ENCODE measurements at regions of chr7 and their contacts with region 1.

Region 1: DNA sequence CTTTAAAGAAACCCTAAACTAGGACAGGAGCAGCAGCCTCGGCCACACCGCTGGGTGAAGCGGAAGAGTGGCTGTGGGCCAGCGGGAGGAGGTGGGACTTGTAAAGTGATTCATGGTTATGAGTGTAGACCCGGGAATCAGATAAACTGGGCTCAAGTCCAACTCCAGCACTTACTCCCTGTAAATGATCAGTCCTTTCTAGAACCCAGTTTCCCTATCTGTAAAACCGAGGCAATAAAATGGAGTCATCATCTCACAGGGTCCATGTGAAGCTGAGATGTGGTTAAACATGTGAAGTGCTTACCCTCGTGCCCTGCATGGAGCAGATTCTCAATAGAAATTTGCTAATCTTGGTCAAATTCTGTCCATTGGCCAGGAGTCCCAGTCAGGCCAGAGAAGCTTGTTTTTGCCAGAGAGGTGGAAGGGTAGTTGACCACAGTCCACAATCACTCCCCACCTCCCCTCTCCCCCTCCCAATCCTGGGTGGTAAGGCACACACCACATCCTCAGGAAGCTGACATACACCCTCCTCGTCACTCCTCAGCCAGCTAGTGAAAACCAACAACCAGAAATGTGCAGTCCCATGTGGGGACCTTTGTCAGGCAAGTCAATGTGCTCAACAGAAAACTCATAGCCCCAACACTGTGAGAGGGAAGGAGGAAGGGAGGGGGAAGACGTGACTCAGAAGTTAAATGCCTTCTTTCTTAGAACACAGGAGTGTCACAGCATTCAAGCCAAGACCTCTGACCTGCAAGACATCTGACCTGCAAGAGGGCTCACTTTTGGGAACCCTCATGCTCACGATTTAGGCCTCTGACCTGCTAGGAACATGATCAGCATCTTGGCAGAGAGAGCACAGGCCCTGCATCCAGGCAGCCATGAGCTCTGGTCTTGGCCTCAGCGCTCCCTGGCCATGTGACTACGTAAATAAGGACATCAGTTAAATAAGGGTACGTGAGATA is 145.1 kb downstream of the PLXNA4 start:
- DNase-seq: peak; percentile 24 to 89
- H3K4me3 ChIP-seq: no peak overlapping the region
- H3K27ac ChIP-seq: peak overlapping the region; percentile 51 to 69
- H3K4me1 ChIP-seq: peaks cover 0 to 45% of the 10 kb centered on the region in 2 donors
- H3K27me3 ChIP-seq: no peaks in the 10 kb centered on the region
- CTCF ChIP-seq: no peak

Region 2: DNA sequence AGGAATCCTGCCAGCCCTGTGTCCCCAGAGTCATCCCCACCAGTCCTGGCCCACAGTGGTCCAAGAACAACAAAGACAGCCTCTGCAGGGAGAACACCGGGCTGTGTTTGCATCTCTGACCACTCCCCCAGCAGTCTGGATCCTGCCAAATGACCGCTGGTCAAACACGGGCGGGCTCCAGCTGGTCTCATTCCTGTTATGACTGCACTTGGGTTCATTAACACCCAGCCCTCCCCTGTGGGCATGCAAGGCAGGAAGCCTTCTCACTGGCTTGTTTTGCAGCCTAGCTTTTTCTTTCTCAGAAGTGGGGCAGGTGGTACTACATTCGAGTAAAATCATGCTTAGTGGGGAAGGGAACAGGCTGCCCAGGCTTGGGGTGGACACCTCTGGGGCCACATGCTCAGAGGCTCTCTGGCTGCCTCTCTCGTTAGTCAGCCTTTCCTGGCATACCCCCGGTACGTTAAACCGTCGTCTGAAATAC is 44.9 kb before region 1 on chr7:
- intact Hi-C with region 1: loop called (anchors 5 kb)
- DNase-seq: peak; percentile 51 to 89
- H3K4me3 ChIP-seq: peak overlapping the region in 1 of 2 donors; percentile 9
- H3K27ac ChIP-seq: peak overlapping the region; percentile 63 to 69
- H3K4me1 ChIP-seq: peaks cover 0 to 17% of the 10 kb centered on the region in 2 donors
- H3K27me3 ChIP-seq: no peaks in the 10 kb centered on the region
- CTCF ChIP-seq: no peak

Region 3: DNA sequence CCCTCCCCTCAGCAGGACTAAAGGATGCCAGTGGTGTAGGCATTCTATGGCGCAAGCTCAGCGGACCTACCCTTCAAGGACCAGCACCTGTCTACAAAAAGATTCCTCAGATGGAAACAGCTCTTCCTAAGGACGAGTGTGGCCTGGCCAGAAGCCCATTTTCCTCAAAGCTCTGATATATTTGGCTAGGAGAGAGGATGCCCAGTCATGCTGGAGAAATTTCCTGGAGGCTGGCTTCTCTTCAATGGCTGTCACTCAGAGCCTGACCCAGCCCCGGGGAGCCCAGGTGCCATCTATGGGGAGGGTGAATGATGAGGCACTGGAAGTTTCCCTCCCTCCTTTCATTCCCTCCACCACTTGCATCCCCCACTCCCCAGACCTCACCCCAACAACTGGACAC is 33.6 kb after region 1 on chr7:
- intact Hi-C with region 1: loop called (anchors 5 kb)
- DNase-seq: peak in 1 of 2 donors; percentile 79
- H3K4me3 ChIP-seq: no peak overlapping the region
- H3K27ac ChIP-seq: peak overlapping the region in 1 of 2 donors; percentile 9
- H3K4me1 ChIP-seq: peaks cover 2 to 11% of the 10 kb centered on the region in 2 donors
- H3K27me3 ChIP-seq: no peaks in the 10 kb centered on the region
- CTCF ChIP-seq: no peak

Region 4: GRCh38 chr7:132789281-132789680 is 358.1 kb after region 1 on chr7:
- intact Hi-C with region 1: no loop called
- DNase-seq: no peak
- H3K4me3 ChIP-seq: no peak overlapping the region
- H3K27ac ChIP-seq: no peak overlapping the region
- H3K4me1 ChIP-seq: no peaks in the 10 kb centered on the region
- H3K27me3 ChIP-seq: no peaks in the 10 kb centered on the region
- CTCF ChIP-seq: no peak

Measured in ascending aorta (tissue), 2 donors.